AG04450 (cell line): ENCODE measurements at regions of chr1 and their contacts with region 1.

Region 1: GRCh38 chr1:109548321-109549267 is at the start of gene GNAI3:
- DNase-seq: peak; percentile 85
- H3K4me3 ChIP-seq: peak within 1 kb of the TSS; percentile 98
- H3K27ac ChIP-seq: peak within 1 kb of the TSS; percentile 83
- H3K27me3 ChIP-seq: no peaks in the 10 kb centered on the region
- CTCF ChIP-seq: no peak
- polyA plus RNA-seq, gene GNAI3: 10.2 and 14.8 TPM in 2 replicates

Region 2: DNA sequence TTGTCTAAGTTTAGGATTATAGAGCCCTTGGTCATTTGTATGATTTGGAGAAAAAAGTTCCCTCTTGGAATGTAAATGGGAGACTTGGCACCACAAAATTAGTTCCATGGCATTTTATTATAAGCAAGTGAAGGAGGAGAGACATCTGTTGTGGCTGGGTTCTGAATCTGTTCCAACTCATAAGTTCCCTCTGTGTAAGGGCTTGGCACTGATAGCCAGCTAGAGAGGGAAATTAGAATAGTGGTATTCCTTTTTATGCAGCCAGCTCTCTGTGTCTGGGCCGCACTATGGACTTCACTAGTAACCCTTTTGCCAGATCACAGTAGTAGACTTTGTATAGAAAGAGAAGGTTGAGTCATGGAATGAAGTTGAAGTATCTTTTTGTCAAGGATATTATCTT is 30.9 kb after region 1 on chr1:
- CTCF ChIA-PET with region 1: interaction called, 6 read pairs
- POLR2A ChIA-PET with region 1: interaction called, 11 read pairs
- DNase-seq: no peak
- H3K4me3 ChIP-seq: no peak overlapping the region
- H3K27ac ChIP-seq: no peak overlapping the region
- H3K27me3 ChIP-seq: no peaks in the 10 kb centered on the region
- CTCF ChIP-seq: no peak

Region 3: GRCh38 chr1:109620841-109621286 is 72.3 kb after region 1 on chr1:
- CTCF ChIA-PET with region 1: interaction called, 8 read pairs
- POLR2A ChIA-PET with region 1: interaction called, 24 read pairs
- DNase-seq: peak; percentile 78
- H3K4me3 ChIP-seq: peak overlapping the region; percentile 95
- H3K27ac ChIP-seq: peak overlapping the region; percentile 97
- H3K27me3 ChIP-seq: no peaks in the 10 kb centered on the region
- CTCF ChIP-seq: no peak

Region 4: GRCh38 chr1:109636201-109636952 is 87.8 kb after region 1 on chr1:
- CTCF ChIA-PET with region 1: interaction called, 106 read pairs
- POLR2A ChIA-PET with region 1: interaction called, 15 read pairs
- DNase-seq: no peak
- H3K4me3 ChIP-seq: no peak overlapping the region
- H3K27ac ChIP-seq: peak overlapping the region; percentile 33
- H3K27me3 ChIP-seq: no peaks in the 10 kb centered on the region
- CTCF ChIP-seq: no peak

Region 5: GRCh38 chr1:109773146-109773899 is 224.7 kb after region 1 on chr1:
- CTCF ChIA-PET with region 1: interaction called, 164 read pairs
- POLR2A ChIA-PET with region 1: interaction called, 9 read pairs
- DNase-seq: peak; percentile 71
- H3K4me3 ChIP-seq: no peak overlapping the region
- H3K27ac ChIP-seq: no peak overlapping the region
- H3K27me3 ChIP-seq: no peaks in the 10 kb centered on the region
- CTCF ChIP-seq: peak; percentile 98